ENCODE measurements at regions of chr4 and their contacts with region 1.

Region 1: DNA sequence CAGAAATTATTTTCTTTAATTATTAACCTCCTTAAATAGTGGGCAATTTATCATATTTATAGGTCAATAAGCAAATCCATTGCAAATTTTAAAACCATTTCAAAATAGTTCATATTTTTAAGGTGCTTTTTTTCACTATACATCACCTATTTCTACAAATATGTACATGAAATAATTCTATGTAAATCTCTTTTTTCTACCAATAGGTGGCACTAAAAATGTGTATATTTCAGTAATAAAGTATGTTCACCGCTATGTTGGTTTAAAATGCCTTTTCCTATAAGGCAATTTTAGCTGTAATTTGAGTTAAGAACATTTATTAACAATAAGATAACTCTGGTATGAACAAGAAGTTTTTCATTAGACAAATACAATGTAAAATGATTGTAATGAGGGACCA is 672.2 kb downstream of the KCTD8 start:
- DNase-seq: no peak
- H3K4me3 ChIP-seq: no peak overlapping the region
- H3K27ac ChIP-seq: no peak overlapping the region
- H3K4me1 ChIP-seq: no peaks in the 10 kb centered on the region
- H3K27me3 ChIP-seq: no peaks in the 10 kb centered on the region
- CTCF ChIP-seq: no peak
- POLR2A ChIP-seq: no peak

Region 2: DNA sequence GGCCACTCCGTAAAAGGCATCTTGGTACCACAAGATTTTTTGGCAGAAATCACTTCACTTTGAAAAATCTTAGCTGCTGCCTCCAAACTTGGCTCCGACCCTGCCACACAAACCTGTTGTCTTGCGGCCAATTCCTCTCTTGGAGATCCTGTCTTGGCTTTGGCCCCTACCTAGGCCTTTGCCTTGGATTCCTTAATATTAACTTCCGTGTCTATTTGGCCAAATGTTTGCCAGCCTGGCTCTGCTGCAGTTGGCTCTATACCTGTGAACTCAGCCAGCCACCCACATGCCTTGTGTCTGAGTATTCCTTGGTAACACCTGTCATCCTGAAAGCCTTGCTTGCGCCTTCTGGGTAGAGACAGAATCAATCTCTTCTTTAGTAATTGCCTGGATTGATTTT is 871.4 kb before region 1 on chr4:
- intact Hi-C with region 1: loop called (anchors 5 kb)
- DNase-seq: peak in 1 of 2 donors; percentile 54
- H3K4me3 ChIP-seq: no peak overlapping the region
- H3K27ac ChIP-seq: no peak overlapping the region
- H3K4me1 ChIP-seq: no peaks in the 10 kb centered on the region
- H3K27me3 ChIP-seq: no peaks in the 10 kb centered on the region
- CTCF ChIP-seq: no peak
- POLR2A ChIP-seq: no peak

Region 3: GRCh38 chr4:43048570-43048969 is 727.8 kb before region 1 on chr4:
- intact Hi-C with region 1: loop called (anchors 5 kb)
- DNase-seq: no peak
- H3K4me3 ChIP-seq: no peak overlapping the region
- H3K27ac ChIP-seq: no peak overlapping the region
- H3K4me1 ChIP-seq: no peaks in the 10 kb centered on the region
- H3K27me3 ChIP-seq: no peaks in the 10 kb centered on the region
- CTCF ChIP-seq: no peak
- POLR2A ChIP-seq: no peak

Region 4: DNA sequence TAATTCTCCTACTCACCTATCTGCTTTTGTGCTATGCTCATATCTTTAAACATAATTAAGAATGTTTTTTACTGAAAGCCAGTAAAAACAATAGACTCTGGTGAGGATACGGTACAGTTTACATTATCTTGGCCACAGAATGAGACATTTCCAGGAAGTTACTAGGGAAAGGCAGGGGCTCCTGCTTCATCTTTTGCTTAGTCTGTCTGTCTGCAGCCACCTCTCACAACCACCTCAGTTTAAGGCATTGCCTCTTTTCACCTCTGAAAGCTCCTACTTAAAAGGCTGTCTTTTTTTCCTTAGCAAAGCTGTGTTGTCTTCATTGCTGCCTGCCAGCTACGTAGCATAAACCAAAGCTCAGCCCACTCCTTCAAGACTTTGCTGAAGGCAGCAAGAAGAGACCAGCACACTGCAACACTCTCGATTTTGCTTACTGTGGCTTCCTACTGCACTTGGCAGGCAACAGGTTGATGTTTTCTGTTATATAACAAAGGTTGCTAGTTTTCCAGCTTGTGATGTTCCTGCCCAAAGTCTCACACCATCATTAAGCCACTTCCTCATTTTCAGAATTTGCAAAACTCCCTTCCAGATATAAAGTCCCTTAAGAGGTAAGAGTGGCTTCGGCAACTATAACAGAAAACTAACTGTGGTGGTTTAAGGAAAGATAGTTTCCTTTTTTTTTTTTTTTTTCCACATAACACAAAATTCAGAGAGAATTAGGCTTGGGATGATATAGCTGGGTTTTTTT is 451.0 kb before region 1 on chr4:
- intact Hi-C with region 1: loop called (anchors 5 kb)
- DNase-seq: no peak
- H3K4me3 ChIP-seq: no peak overlapping the region
- H3K27ac ChIP-seq: no peak overlapping the region
- H3K4me1 ChIP-seq: no peaks in the 10 kb centered on the region
- H3K27me3 ChIP-seq: no peaks in the 10 kb centered on the region
- CTCF ChIP-seq: no peak
- POLR2A ChIP-seq: no peak